ENCODE measurements at regions of chr7 and their contacts with region 1.

Region 1: GRCh38 chr7:148698397-148699023 is at the start of gene CUL1:
- DNase-seq: peak; percentile 95
- H3K4me3 Mint-ChIP-seq: peak within 1 kb of the TSS; percentile 92
- H3K27ac Mint-ChIP-seq: peak within 1 kb of the TSS; percentile 94
- H3K4me1 Mint-ChIP-seq: peaks cover 54% of the 10 kb centered on the region
- H3K27me3 Mint-ChIP-seq: no peaks in the 10 kb centered on the region
- total RNA-seq, gene CUL1: 82.2 and 82.4 TPM in 2 replicates

Region 2: GRCh38 chr7:148572067-148572522 is 126.4 kb before region 1 on chr7:
- intact Hi-C with region 1: no loop called
- DNase-seq: no peak
- H3K4me3 Mint-ChIP-seq: no peak overlapping the region
- H3K27ac Mint-ChIP-seq: no peak overlapping the region
- H3K4me1 Mint-ChIP-seq: peaks cover 15% of the 10 kb centered on the region
- H3K27me3 Mint-ChIP-seq: peaks cover 12% of the 10 kb centered on the region

Region 3: GRCh38 chr7:148584154-148584827 is 114.2 kb before region 1 on chr7:
- intact Hi-C with region 1: loop called (anchors 2 kb)
- DNase-seq: no peak
- H3K4me3 Mint-ChIP-seq: peak overlapping the region; percentile 20
- H3K27ac Mint-ChIP-seq: peak overlapping the region; percentile 12
- H3K4me1 Mint-ChIP-seq: peaks cover 18% of the 10 kb centered on the region
- H3K27me3 Mint-ChIP-seq: peaks cover 11% of the 10 kb centered on the region

Region 4: GRCh38 chr7:148727501-148728278 is 29.2 kb after region 1 on chr7:
- intact Hi-C with region 1: loop called (anchors 2 kb)
- DNase-seq: peak; percentile 65
- H3K4me3 Mint-ChIP-seq: peak overlapping the region; percentile 47
- H3K27ac Mint-ChIP-seq: peak overlapping the region; percentile 68
- H3K4me1 Mint-ChIP-seq: peaks cover 49% of the 10 kb centered on the region
- H3K27me3 Mint-ChIP-seq: no peaks in the 10 kb centered on the region

Region 5: GRCh38 chr7:148867596-148868377 is 169.3 kb after region 1 on chr7:
- intact Hi-C with region 1: no loop called
- DNase-seq: no peak
- H3K4me3 Mint-ChIP-seq: no peak overlapping the region
- H3K27ac Mint-ChIP-seq: no peak overlapping the region
- H3K4me1 Mint-ChIP-seq: peaks cover 52% of the 10 kb centered on the region
- H3K27me3 Mint-ChIP-seq: no peaks in the 10 kb centered on the region

Region 6: GRCh38 chr7:148914208-148914777 is 215.8 kb after region 1 on chr7:
- intact Hi-C with region 1: loop called (anchors 1 kb)
- DNase-seq: peak; percentile 81
- H3K4me3 Mint-ChIP-seq: peak overlapping the region; percentile 84
- H3K27ac Mint-ChIP-seq: peak overlapping the region; percentile 98
- H3K4me1 Mint-ChIP-seq: peaks cover 62% of the 10 kb centered on the region
- H3K27me3 Mint-ChIP-seq: peaks cover 1% of the 10 kb centered on the region

Region 7: GRCh38 chr7:148987010-148987750 is 288.7 kb after region 1 on chr7:
- intact Hi-C with region 1: loop called (anchors 5 kb)
- DNase-seq: peak; percentile 94
- H3K4me3 Mint-ChIP-seq: peak overlapping the region; percentile 95
- H3K27ac Mint-ChIP-seq: peak overlapping the region; percentile 94
- H3K4me1 Mint-ChIP-seq: peaks cover 41% of the 10 kb centered on the region
- H3K27me3 Mint-ChIP-seq: peaks cover 23% of the 10 kb centered on the region

Region 8: DNA sequence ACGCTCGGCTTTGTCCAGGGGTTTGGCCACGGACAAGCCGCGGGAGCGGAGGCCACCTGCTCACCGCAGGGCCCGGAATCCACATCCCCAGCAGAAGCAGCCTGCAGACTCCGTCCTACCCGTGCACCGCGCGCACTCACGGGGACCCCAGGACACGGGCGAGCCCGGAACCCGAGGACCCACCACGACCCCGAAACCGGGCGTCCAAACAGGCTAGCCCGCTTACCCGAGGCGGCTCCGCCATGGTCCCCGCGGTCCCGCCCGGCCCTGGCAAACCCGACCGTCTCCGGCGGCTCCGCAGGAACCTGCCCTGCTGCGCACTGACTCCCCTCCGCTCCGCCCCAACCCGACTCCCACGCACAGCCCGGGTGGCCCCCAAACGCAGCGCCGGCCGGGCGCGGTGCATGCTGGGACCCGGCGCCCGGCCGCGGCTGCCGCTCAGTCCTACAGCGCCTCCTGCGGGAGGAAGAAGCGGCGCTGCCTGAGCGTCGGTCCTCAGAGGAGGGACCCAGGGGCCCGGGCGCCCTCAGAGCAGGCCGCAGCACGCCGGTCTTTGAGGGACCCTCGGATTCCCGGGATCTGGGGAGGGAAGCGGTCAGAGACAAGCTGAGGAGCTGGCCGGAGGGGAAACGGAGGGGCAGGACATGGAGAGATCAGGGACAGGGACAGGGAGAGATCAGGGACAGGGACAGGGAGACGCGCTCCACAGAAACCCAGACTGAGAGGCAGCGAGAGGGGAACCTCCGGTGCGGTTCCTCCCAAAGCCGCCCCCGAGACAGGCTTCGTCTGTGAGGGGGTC is 392.1 kb after region 1 on chr7 and contains the start of gene ZNF786:
- intact Hi-C with region 1: loop called (anchors 2 kb)
- DNase-seq: peak; percentile 97
- H3K4me3 Mint-ChIP-seq: peak within 1 kb of the TSS; percentile 98
- H3K27ac Mint-ChIP-seq: peak within 1 kb of the TSS; percentile 100
- H3K4me1 Mint-ChIP-seq: peaks cover 15% of the 10 kb centered on the region
- H3K27me3 Mint-ChIP-seq: no peaks in the 10 kb centered on the region
- total RNA-seq, gene ZNF786: 10.2 and 10.3 TPM in 2 replicates